ENCODE measurements at regions of chr1 and their contacts with region 1.

Region 1: DNA sequence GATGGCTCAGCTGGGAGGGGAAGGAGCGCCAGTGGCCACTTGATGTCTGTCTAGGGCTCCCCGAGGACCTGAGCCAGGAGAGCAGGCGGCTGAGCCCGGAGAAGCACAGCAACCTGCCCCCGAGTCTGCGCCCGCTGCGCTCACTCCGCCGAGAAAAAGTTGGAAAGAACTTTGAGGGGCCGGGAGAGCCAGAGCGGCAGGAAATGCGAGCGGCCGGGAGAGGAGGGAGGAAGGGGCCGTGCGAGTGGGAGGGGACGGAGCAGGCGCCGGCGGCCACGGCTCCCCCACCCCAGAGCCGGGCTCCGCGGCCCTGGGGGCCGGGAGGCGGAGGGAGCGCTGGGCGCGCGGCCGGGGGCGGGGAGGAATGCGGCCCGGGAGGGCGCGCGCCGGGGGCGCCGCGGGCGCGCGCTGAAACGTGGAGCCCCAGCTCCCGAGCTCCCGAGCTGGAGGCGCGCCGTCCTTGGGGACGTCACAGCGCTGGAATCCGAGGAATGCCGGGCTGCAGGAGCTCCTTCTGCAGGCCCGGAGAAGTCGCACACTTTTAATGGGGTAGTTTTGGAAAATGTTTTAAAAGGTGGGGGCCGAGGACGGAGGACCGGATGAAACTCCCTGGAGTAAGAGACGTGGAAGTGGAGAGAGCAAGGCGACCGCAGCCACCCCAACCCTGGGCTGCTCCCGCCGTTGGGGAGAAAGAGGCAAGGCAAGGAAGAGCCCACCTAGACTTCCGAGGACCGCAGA is at the start of gene PTPN14:
- DNase-seq: peak; percentile 26
- H3K4me3 Mint-ChIP-seq: peak within 1 kb of the TSS; percentile 93
- H3K27ac Mint-ChIP-seq: peak within 1 kb of the TSS; percentile 87
- H3K4me1 Mint-ChIP-seq: peaks cover 45% of the 10 kb centered on the region
- H3K27me3 Mint-ChIP-seq: peaks cover 4% of the 10 kb centered on the region
- total RNA-seq, gene PTPN14: 71.4 and 75.6 TPM in 2 replicates

Region 2: GRCh38 chr1:214086945-214087344 is 464.7 kb before region 1 on chr1:
- intact Hi-C with region 1: no loop called
- DNase-seq: no peak
- H3K4me3 Mint-ChIP-seq: no peak overlapping the region
- H3K27ac Mint-ChIP-seq: no peak overlapping the region
- H3K4me1 Mint-ChIP-seq: no peaks in the 10 kb centered on the region
- H3K27me3 Mint-ChIP-seq: no peaks in the 10 kb centered on the region

Region 3: DNA sequence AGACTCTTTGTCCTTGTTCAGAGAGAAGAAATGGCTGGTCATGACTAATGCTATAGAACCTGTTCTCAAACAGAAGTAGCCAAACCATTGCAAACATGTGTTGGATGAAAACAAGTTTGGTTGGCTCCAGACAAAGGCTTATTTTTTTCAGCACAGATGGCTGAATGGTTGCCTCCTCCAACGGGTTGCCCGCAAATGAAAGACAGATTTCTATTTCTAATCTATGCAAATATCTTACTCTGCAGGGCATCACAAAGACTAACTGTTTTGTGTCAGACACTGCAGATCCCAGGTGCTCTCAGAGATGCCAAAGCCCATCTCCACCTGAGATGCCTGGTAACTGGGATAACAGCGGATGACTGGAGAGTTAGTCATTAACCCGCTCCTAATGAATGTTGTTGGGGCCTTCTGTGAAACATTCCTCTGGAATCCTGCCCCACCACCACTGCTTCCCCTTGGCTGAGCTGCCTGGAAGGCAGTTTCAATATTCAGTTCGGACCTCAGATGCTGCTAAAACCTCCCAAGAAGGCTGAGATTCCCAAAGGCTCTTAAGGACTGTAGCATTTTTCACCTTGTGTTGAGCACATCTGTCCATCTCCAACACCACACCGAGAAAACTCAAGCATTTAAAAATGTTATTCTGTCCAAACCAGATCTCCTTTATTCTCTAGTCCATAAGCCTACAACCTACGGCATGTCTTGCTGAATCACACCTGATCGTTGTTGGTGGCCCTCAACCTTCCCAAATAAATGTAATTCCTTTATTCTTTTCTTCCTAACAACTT is 104.6 kb before region 1 on chr1:
- intact Hi-C with region 1: loop called (anchors 2 kb)
- DNase-seq: no peak
- H3K4me3 Mint-ChIP-seq: no peak overlapping the region
- H3K27ac Mint-ChIP-seq: peak overlapping the region; percentile 99
- H3K4me1 Mint-ChIP-seq: peaks cover 76% of the 10 kb centered on the region
- H3K27me3 Mint-ChIP-seq: no peaks in the 10 kb centered on the region

Region 4: DNA sequence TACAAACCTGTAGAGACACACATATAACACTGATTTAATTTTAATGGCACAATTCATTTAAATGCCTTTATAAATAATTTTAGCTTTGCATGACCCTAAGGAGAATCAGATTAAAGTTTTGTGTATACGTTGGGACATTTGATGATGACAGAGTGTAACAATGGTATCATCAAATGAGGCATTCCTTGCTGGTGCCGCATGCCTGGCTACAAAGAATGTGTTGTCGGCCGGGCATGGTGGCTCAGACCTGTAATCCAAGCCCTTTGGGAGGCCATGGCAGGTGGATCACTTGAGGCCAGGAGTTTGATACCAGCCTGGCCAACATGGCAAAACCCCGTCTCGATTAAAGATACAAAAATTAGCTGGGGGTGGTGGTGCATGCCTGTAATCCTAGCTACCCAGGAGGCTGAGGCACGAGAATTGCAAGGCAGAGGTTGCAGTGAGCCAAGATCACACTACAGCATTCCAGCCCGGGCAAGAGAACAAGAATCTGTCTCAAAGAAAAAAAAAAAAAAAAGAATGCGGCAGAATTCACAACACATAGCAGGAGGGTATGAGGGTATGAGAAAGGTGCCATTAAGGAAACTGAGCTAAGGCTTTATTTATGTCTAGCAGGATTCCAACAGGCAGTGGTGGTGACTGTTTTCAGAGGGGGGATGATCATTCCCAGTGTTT is 59.1 kb before region 1 on chr1:
- intact Hi-C with region 1: no loop called
- DNase-seq: no peak
- H3K4me3 Mint-ChIP-seq: no peak overlapping the region
- H3K27ac Mint-ChIP-seq: no peak overlapping the region
- H3K4me1 Mint-ChIP-seq: peaks cover 14% of the 10 kb centered on the region
- H3K27me3 Mint-ChIP-seq: peaks cover 3% of the 10 kb centered on the region

Region 5: DNA sequence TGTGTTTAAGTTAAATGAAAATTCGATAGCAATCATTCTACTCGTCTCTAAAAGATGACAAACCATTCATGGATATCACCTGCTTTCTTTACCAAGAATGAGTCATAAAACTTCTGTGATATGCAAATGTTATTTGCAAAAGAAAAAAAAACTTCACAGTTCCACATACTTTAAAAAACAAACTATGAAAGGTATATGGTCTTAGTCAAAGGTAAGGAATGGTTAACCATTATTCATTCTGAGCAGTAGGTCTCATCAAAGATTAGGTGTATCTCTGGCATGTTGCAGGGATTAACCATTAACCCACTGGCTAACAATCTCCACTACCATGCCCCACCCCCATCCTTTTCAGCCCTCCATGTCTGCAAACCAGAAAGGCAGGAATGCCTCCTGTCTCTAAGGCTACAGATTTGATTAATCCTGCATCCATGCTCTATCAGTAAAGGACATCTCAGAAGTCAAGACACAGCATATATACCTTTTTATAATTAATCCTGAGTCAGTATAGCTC is 44.6 kb before region 1 on chr1:
- intact Hi-C with region 1: loop called (anchors 5 kb)
- DNase-seq: no peak
- H3K4me3 Mint-ChIP-seq: peak overlapping the region; percentile 7
- H3K27ac Mint-ChIP-seq: no peak overlapping the region
- H3K4me1 Mint-ChIP-seq: peaks cover 27% of the 10 kb centered on the region
- H3K27me3 Mint-ChIP-seq: peaks cover 1% of the 10 kb centered on the region

Region 6: DNA sequence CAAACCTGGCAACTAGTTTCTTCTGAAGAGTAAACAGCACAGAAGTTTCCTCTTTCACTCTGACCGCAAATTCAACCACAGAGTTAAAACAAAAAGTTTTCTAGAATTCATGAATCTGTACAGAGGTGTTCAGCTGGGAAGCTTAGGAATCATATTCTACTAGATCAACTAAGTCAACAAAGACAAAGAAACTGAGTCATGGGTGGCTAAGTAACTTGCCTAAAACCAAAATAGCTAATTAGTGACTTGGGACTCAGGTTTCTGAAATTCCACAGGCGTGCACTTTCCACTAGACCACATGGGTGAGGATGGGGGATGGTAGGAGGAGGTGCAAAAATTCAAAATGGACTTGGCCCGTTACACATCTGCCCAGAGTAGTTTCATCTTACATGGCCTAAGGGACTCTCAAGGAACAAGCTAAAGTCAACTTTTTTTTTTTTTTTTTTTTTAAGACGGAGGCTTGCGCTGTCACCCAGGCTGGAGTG is 26.0 kb before region 1 on chr1:
- intact Hi-C with region 1: loop called (anchors 2 kb)
- DNase-seq: no peak
- H3K4me3 Mint-ChIP-seq: peak overlapping the region; percentile 30
- H3K27ac Mint-ChIP-seq: peak overlapping the region; percentile 65
- H3K4me1 Mint-ChIP-seq: peaks cover 37% of the 10 kb centered on the region
- H3K27me3 Mint-ChIP-seq: no peaks in the 10 kb centered on the region

Region 7: DNA sequence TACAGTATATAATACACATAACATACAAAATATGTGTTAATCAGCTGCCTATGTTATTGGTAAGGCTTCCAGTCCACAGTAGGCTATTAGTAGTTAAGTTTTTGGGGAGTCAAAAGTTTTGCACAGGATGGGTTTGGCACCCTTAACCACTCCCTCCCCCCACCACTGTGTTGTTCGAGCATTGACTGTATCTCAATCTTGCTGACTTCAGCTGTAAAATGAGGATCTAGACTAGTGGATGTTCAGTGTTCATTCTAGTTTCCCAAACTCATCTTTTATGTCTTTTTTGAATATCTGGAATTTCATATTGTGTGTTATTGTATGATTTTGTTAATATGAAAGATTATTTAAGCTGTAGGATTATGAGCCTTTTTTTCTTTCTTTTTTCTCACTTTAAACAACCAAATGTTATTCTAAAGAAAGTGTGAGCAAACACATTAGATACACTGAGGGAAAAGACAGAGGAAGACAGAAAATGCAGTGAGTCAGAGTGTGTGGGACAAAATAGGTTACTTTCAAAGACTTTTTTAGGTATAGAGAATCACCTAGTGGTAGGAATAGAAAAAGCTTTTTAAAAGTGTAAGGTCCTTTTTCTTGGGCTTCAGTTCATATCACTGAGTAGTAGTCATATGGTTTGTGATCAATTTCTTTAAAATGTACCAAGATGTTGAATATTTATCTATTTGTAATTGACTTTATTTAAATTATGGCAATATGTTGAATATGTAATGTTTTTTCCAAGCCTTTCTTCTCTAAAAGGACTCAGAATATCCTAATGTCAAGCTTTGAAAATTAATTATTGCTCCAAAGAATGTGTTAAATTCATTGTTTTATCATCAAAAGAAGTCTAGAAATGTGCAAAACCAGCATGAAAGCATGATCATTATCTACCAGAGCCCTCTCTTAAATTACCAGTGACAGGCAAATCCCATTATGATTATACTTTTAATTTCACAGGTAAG is 33.5 kb after region 1 on chr1:
- intact Hi-C with region 1: loop called (anchors 2 kb)
- DNase-seq: no peak
- H3K4me3 Mint-ChIP-seq: no peak overlapping the region
- H3K27ac Mint-ChIP-seq: peak overlapping the region; percentile 70
- H3K4me1 Mint-ChIP-seq: peaks cover 19% of the 10 kb centered on the region
- H3K27me3 Mint-ChIP-seq: no peaks in the 10 kb centered on the region

Region 8: DNA sequence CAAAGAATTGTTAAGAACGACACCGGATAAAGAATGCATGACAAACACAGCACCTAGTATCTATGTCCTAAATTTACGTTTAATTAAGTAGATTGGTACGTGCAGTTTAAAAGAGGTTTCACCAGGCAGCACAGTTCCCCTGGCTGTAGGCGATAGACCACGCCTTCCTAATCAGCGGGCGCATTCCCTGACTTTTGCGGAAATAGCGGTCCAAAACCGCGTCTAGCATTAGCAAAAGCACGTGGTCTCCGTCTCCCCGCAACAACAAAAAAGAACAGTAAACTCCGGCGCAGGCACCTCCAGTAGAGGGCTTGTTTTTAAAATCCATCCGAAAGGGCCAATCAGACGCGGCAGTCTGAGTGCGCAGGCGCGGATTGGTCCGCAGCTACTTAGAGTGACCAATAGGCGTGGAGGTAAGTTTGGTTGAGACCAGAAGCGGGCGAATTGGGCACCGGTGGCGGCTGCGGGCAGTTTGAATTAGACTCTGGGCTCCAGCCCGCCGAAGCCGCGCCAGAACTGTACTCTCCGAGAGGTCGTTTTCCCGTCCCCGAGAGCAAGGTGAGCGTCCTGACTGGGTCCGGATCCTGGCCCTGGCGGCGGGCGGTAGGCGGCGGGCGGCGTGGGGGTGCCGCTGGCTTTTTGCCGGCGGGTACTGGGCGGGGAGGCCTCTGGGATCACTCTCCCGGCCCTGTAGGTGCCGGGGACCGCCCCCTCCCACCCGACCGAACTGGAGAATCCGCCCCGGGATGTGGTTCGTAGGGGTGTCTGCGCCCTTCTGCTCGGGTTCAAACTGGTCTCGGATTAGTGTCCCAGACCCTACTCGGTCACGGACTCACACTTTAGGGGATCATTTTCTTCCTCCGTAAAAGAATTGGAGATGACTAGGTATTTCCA is 51.4 kb after region 1 on chr1 and contains the start of gene CENPF:
- intact Hi-C with region 1: loop called (anchors 2 kb)
- DNase-seq: peak; percentile 95
- H3K4me3 Mint-ChIP-seq: peak within 1 kb of the TSS; percentile 98
- H3K27ac Mint-ChIP-seq: peak within 1 kb of the TSS; percentile 94
- H3K4me1 Mint-ChIP-seq: peaks cover 29% of the 10 kb centered on the region
- H3K27me3 Mint-ChIP-seq: no peaks in the 10 kb centered on the region
- total RNA-seq, gene CENPF: 77.1 and 85.9 TPM in 2 replicates

Measured in activated T-helper 2 cell treated with anti-CD3 and anti-CD28 coated beads, Interferon-gamma antibody, Interleukin-2, Interleukin-4, amounts not matched to agents 10 μg/mL and 5 μg/mL and 100 μg/mL, durations not matched to agents 14 hours and 24 hours and 36 hours (primary cell).